IMR-90 (cell line): ENCODE measurements at regions of chr2 and their contacts with region 1.

Region 1: GRCh38 chr2:130332271-130333073 is 10.2 kb upstream of the IMP4 start:
- DNase-seq: peak; percentile 81
- ATAC-seq: peak; percentile 74
- H3K4me3 ChIP-seq: no peak overlapping the region
- H3K27ac ChIP-seq: no peak overlapping the region
- H3K4me1 ChIP-seq: peaks cover 5% of the 10 kb centered on the region
- H3K27me3 ChIP-seq: peaks cover 7% of the 10 kb centered on the region
- CTCF ChIP-seq: peak; percentile 99
- POLR2A ChIP-seq: 0 out of 2 replicates have a peak, but pooled peaks have one; percentile 29
- RAD21 ChIP-seq: peak; percentile 94

Region 2: DNA sequence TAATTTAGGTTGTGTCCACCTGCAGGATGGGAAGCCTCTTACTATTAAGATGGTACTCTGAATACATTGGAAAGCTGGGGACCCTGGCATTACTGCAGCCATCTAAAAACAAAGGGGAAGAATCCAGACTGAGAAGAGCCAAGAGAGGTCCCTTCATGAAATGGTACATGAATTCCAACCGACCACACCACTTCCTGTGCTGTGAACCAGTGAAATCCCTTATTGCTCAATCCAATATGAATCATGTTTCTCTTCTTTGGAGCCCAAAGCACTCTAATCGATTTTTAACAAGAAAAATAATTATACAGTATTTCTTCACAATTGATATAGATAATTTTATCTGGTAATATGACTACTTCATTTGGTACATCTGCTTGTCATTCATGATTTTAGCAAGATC is 832.7 kb before region 1 on chr2:
- CTCF ChIA-PET with region 1: no interaction called
- POLR2A ChIA-PET with region 1: no interaction called
- dilution Hi-C with region 1: no loop called
- in situ Hi-C with region 1: no loop called
- intact Hi-C with region 1: no loop called
- DNase-seq: no peak
- ATAC-seq: no peak
- H3K4me3 ChIP-seq: no peak overlapping the region
- H3K27ac ChIP-seq: no peak overlapping the region
- H3K4me1 ChIP-seq: no peaks in the 10 kb centered on the region
- H3K27me3 ChIP-seq: no peaks in the 10 kb centered on the region
- CTCF ChIP-seq: no peak
- POLR2A ChIP-seq: no peak
- RAD21 ChIP-seq: no peak

Region 3: DNA sequence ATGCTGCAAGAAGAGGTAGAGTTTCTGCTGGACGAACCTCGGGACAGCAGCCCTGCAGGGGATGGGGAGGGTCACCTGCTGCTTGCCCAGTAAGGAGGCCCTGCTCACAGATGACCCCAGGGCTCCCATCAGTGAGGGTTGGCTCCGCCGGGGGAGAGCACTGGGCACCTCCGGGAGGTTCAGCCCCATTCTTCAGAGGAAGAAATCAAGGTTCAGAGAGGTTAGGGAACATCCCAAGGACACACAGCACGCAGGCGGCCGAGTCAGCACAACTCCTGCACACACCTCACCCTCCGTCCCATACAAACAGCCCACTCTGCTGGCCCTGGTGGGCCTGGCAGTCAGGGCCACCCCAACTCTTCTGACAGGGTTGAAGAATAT is 175.9 kb before region 1 on chr2:
- CTCF ChIA-PET with region 1: interaction called, 5 read pairs
- POLR2A ChIA-PET with region 1: no interaction called
- dilution Hi-C with region 1: no loop called
- in situ Hi-C with region 1: no loop called
- intact Hi-C with region 1: loop called (anchors 1 kb)
- DNase-seq: no peak
- ATAC-seq: no peak
- H3K4me3 ChIP-seq: no peak overlapping the region
- H3K27ac ChIP-seq: no peak overlapping the region
- H3K4me1 ChIP-seq: no peaks in the 10 kb centered on the region
- H3K27me3 ChIP-seq: no peaks in the 10 kb centered on the region
- CTCF ChIP-seq: no peak
- POLR2A ChIP-seq: no peak
- RAD21 ChIP-seq: no peak

Region 4: DNA sequence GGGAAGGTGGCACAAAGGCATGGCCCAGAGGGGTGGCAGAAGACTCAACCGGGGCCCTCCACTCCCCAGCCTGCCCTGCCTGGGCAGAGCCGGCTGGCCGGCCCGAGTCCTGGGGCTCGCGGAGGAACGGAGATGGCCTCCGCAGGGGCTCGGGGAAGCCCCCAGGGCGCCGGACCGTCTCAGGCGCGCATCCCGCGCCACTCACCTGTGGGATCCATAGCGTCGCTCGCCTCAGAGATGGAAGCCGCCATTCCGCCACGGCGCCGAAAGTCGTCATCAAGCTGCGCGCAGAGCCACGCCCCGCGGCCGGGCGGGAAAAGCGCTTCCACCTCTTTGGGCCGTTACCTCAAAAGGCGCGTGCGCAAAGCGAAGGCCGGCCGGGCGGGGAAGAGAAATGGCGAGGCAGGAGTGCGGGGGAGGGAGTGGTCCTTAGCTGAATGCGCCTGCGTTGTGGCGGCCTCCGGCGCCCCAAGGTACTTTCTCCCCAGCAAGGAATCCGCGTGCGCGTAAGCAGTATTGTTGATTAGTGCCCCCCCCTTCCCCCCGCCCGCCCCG is 151.1 kb before region 1 on chr2 and contains the start of gene SMPD4:
- CTCF ChIA-PET with region 1: interaction called, 4 read pairs
- POLR2A ChIA-PET with region 1: no interaction called
- dilution Hi-C with region 1: no loop called
- in situ Hi-C with region 1: loop called (anchors 5 kb)
- intact Hi-C with region 1: loop called (anchors 1 kb)
- DNase-seq: peak; percentile 93
- ATAC-seq: peak; percentile 80
- H3K4me3 ChIP-seq: peak within 1 kb of the TSS; percentile 99
- H3K27ac ChIP-seq: peak within 1 kb of the TSS; percentile 75
- H3K4me1 ChIP-seq: peaks cover 8% of the 10 kb centered on the region
- H3K27me3 ChIP-seq: no peaks in the 10 kb centered on the region
- CTCF ChIP-seq: no peak
- POLR2A ChIP-seq: peak; percentile 30
- RAD21 ChIP-seq: no peak
- total RNA-seq, gene SMPD4: 8.6 and 10.6 TPM in 2 replicates

Region 5: GRCh38 chr2:130231656-130232055 is 100.8 kb before region 1 on chr2:
- CTCF ChIA-PET with region 1: no interaction called
- POLR2A ChIA-PET with region 1: no interaction called
- dilution Hi-C with region 1: no loop called
- in situ Hi-C with region 1: no loop called
- intact Hi-C with region 1: no loop called
- DNase-seq: no peak
- ATAC-seq: no peak
- H3K4me3 ChIP-seq: no peak overlapping the region
- H3K27ac ChIP-seq: no peak overlapping the region
- H3K4me1 ChIP-seq: no peaks in the 10 kb centered on the region
- H3K27me3 ChIP-seq: no peaks in the 10 kb centered on the region
- CTCF ChIP-seq: no peak
- POLR2A ChIP-seq: no peak
- RAD21 ChIP-seq: no peak

Region 6: DNA sequence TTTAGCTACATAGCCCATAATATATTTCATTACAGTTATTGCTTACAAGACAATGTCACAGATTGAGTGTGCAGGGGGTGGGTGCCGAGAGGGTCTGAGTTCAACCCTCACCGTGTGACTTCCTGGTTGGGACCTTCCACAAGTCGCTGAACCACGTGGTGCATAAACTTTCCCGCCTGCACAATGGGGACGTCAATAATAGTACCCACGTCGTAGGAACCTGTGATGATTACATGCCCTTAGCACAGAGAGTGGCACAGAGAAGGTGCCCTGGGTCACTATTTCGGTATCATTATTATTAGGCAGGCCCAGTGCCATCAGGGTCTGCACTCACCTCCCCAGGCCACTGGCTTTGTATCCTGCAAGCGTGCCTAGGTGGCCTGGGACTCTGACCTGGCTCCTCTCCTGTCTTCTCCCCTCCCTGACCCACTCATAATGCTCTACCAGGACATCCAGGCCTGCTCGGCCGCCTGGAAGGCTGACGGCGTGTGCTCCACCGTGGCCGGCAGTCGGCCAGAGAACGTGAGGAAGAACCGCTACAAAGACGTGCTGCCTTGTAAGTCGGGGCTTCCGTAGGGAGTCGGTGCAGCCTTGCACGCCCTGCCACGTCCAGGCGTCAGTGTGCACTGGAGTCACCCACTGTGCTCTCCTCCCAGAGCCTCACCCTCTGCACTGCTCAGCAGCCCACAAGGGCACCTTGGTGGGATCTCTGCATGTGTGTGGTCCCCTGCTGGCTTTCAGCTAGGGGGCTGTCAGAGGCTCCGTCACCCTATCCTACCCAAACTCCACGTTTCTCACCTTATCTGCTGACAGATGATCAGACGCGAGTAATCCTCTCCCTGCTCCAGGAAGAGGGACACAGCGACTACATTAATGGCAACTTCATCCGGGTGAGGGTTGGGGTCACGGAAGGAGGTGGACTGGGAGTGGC is 26.2 kb after region 1 on chr2:
- CTCF ChIA-PET with region 1: no interaction called
- POLR2A ChIA-PET with region 1: no interaction called
- dilution Hi-C with region 1: no loop called
- in situ Hi-C with region 1: no loop called
- intact Hi-C with region 1: no loop called
- DNase-seq: no peak
- ATAC-seq: no peak
- H3K4me3 ChIP-seq: no peak overlapping the region
- H3K27ac ChIP-seq: no peak overlapping the region
- H3K4me1 ChIP-seq: no peaks in the 10 kb centered on the region; the same call in 1 of the 2 replicates
- H3K27me3 ChIP-seq: no peaks in the 10 kb centered on the region
- CTCF ChIP-seq: no peak
- POLR2A ChIP-seq: no peak
- RAD21 ChIP-seq: no peak